IMR-90 (cell line): ENCODE measurements at regions of chr9 and their contacts with region 1.

Region 1: DNA sequence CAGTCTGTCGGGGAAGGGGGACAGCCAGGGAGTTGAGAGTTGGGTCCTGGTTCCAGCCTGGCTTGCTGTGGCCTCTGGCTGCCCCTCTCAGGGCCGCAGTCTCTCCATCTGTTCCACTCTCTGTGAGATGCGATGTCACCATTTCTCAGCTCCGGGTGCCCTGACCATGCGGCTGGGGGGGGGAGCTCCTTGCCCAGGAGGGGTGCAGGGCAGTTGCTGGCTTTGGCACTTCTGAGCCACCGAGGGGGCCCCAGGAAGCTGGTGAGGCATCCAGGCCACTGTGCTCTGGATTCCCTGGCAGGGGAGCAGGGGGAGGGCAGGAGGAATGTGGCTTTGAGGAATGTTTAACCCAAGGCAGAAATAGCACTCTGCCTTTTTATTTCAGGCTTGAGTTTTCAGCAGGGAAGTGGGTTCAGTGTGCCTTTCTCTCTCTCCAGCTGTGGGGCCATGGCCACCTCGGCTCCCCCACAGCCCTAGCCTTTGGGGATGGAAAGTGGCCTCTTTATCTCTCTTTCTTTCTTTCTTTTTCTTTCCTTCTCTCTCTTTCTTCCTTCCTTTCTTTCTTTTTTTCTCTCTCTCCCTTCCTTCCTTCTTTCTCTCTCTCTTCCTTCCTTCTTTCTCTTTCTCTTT is 11.0 kb downstream of the NCS1 start:
- DNase-seq: peak; percentile 71
- ATAC-seq: peak; percentile 85
- H3K4me3 ChIP-seq: no peak overlapping the region
- H3K27ac ChIP-seq: peak overlapping the region; percentile 83
- H3K4me1 ChIP-seq: peaks cover 40% of the 10 kb centered on the region
- H3K27me3 ChIP-seq: no peaks in the 10 kb centered on the region
- CTCF ChIP-seq: no peak
- POLR2A ChIP-seq: no peak
- RAD21 ChIP-seq: peak; percentile 15; the same call in 1 of the 2 replicates

Region 2: DNA sequence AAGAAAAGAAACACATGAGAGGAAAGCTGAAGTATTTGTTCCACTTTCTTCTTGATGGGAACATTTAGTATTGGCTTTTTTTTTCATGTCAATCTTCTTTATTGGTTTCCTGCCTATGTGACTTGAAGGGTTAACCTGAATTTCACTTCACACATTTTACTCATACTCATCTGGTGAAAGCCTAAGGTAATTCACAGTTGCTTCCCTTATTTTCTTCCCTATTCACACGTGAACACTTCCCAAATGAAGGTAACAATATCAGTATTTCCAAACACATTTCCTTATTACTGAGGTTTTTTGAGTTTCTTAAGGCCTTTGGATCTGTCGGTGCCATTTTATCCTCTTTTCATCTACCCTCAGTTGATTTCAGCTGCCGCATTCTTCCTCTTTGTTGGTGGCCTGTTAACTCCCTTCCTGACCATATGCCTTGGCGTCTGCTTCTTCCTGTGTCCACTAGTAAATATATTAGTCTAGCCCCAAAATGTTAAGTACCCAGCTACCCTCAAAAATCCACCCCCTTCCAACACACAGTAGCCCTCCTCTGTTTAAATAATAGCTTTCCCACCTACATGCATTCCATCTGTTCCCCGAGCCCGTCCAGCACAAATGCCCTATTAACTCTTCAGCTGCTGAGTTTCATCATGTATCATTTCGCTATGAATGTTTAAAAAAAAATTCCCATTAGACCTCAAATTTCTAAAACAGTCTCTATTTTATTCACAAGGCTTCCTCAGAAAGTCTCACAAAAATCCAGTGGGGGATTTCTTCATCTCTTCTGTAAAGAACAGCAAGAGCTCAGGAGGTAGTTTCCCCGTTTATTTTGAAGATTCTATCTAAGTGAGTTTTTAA is 250.7 kb before region 1 on chr9:
- CTCF ChIA-PET with region 1: no interaction called
- POLR2A ChIA-PET with region 1: no interaction called
- dilution Hi-C with region 1: no loop called
- in situ Hi-C with region 1: no loop called
- intact Hi-C with region 1: no loop called
- DNase-seq: peak; percentile 10
- ATAC-seq: peak; percentile 56
- H3K4me3 ChIP-seq: no peak overlapping the region
- H3K27ac ChIP-seq: peak overlapping the region; percentile 3; the same call in 1 of the 2 replicates
- H3K4me1 ChIP-seq: peaks cover 19% of the 10 kb centered on the region
- H3K27me3 ChIP-seq: no peaks in the 10 kb centered on the region
- CTCF ChIP-seq: no peak
- POLR2A ChIP-seq: no peak
- RAD21 ChIP-seq: no peak

Region 3: GRCh38 chr9:130220352-130220751 is 37.1 kb after region 1 on chr9:
- CTCF ChIA-PET with region 1: no interaction called
- POLR2A ChIA-PET with region 1: no interaction called
- dilution Hi-C with region 1: no loop called
- in situ Hi-C with region 1: no loop called
- intact Hi-C with region 1: loop called (anchors 5 kb)
- DNase-seq: peak; percentile 72
- ATAC-seq: peak; percentile 93
- H3K4me3 ChIP-seq: no peak overlapping the region
- H3K27ac ChIP-seq: peak overlapping the region; percentile 72; the same call in 1 of the 2 replicates
- H3K4me1 ChIP-seq: peaks cover 16% of the 10 kb centered on the region
- H3K27me3 ChIP-seq: no peaks in the 10 kb centered on the region
- CTCF ChIP-seq: peak; percentile 34
- POLR2A ChIP-seq: no peak
- RAD21 ChIP-seq: 0 out of 2 replicates have a peak, but pooled peaks have one; percentile 33

Region 4: GRCh38 chr9:130542457-130543228 is 359.4 kb after region 1 on chr9:
- CTCF ChIA-PET with region 1: no interaction called
- POLR2A ChIA-PET with region 1: no interaction called
- dilution Hi-C with region 1: no loop called
- in situ Hi-C with region 1: no loop called
- intact Hi-C with region 1: no loop called
- DNase-seq: no peak
- ATAC-seq: no peak
- H3K4me3 ChIP-seq: no peak overlapping the region
- H3K27ac ChIP-seq: no peak overlapping the region
- H3K4me1 ChIP-seq: no peaks in the 10 kb centered on the region
- H3K27me3 ChIP-seq: peaks cover 57% of the 10 kb centered on the region
- CTCF ChIP-seq: no peak
- POLR2A ChIP-seq: no peak
- RAD21 ChIP-seq: no peak